ENCODE measurements at regions of chr12 and their contacts with region 1.

Region 1: GRCh38 chr12:19299765-19300164 is 139.5 kb upstream of the AEBP2 start:
- DNase-seq: no peak
- H3K4me3 ChIP-seq: no peak overlapping the region
- H3K27ac ChIP-seq: no peak overlapping the region
- H3K4me1 ChIP-seq: peaks cover 0 to 16% (median 7%) of the 10 kb centered on the region in 4 donors
- H3K27me3 ChIP-seq: no peaks in the 10 kb centered on the region
- CTCF ChIP-seq: no peak
- EP300 ChIP-seq: no peak
- POLR2A ChIP-seq: no peak

Region 2: GRCh38 chr12:18246063-18246462 is 1053.7 kb before region 1 on chr12:
- intact Hi-C with region 1: loop called (anchors 10 kb)
- DNase-seq: no peak
- H3K4me3 ChIP-seq: no peak overlapping the region
- H3K27ac ChIP-seq: no peak overlapping the region
- H3K4me1 ChIP-seq: peaks cover 0 to 8% (median 3%) of the 10 kb centered on the region in 4 donors
- H3K27me3 ChIP-seq: no peaks in the 10 kb centered on the region
- CTCF ChIP-seq: no peak
- EP300 ChIP-seq: no peak
- POLR2A ChIP-seq: no peak

Region 3: GRCh38 chr12:19048943-19049342 is 250.8 kb before region 1 on chr12:
- intact Hi-C with region 1: no loop called
- DNase-seq: no peak
- H3K4me3 ChIP-seq: no peak overlapping the region
- H3K27ac ChIP-seq: no peak overlapping the region
- H3K4me1 ChIP-seq: peaks cover 0 to 14% (median 4%) of the 10 kb centered on the region in 4 donors
- H3K27me3 ChIP-seq: no peaks in the 10 kb centered on the region
- CTCF ChIP-seq: no peak
- EP300 ChIP-seq: no peak
- POLR2A ChIP-seq: no peak

Measured in esophagus muscularis mucosa (tissue), 4 donors.